CD4-positive, alpha-beta memory T cell (primary cell): ENCODE measurements at regions of chr10 and their contacts with region 1.

Region 1: GRCh38 chr10:43287056-43288007 is 20.5 kb upstream of the RASGEF1A start:
- DNase-seq: peak in 4 of 5 donors; percentile 52 to 84 (median 54)
- H3K4me3 ChIP-seq: peak overlapping the region; percentile 10 to 42
- H3K4me3 Mint-ChIP-seq: peak overlapping the region in 7 of 8 donors; percentile 54 to 86 (median 72)
- H3K27ac ChIP-seq: peak overlapping the region; percentile 32
- H3K27ac Mint-ChIP-seq: peak overlapping the region; percentile 73 to 92 (median 87)
- H3K4me1 ChIP-seq: peaks cover 42% of the 10 kb centered on the region
- H3K4me1 Mint-ChIP-seq: peaks cover 29 to 56% (median 42%) of the 10 kb centered on the region in 4 donors
- H3K27me3 ChIP-seq: no peaks in the 10 kb centered on the region
- H3K27me3 Mint-ChIP-seq: no peaks in the 10 kb centered on the region

Region 2: GRCh38 chr10:43204943-43205671 is 82.2 kb before region 1 on chr10:
- CTCF ChIA-PET with region 1: interaction called, 18 read pairs
- POLR2A ChIA-PET with region 1: interaction called, 3 read pairs
- intact Hi-C with region 1: loop called (anchors 10 kb)
- DNase-seq: peak in 4 of 5 donors; percentile 29 to 52 (median 47)
- H3K4me3 ChIP-seq: no peak overlapping the region
- H3K4me3 Mint-ChIP-seq: no peak overlapping the region
- H3K27ac ChIP-seq: no peak overlapping the region
- H3K27ac Mint-ChIP-seq: peak overlapping the region in 2 of 7 donors; percentile 53 to 66
- H3K4me1 ChIP-seq: peaks cover 8% of the 10 kb centered on the region
- H3K4me1 Mint-ChIP-seq: peaks cover 0 to 10% (median 2%) of the 10 kb centered on the region in 4 donors
- H3K27me3 ChIP-seq: no peaks in the 10 kb centered on the region
- H3K27me3 Mint-ChIP-seq: no peaks in the 10 kb centered on the region

Region 3: DNA sequence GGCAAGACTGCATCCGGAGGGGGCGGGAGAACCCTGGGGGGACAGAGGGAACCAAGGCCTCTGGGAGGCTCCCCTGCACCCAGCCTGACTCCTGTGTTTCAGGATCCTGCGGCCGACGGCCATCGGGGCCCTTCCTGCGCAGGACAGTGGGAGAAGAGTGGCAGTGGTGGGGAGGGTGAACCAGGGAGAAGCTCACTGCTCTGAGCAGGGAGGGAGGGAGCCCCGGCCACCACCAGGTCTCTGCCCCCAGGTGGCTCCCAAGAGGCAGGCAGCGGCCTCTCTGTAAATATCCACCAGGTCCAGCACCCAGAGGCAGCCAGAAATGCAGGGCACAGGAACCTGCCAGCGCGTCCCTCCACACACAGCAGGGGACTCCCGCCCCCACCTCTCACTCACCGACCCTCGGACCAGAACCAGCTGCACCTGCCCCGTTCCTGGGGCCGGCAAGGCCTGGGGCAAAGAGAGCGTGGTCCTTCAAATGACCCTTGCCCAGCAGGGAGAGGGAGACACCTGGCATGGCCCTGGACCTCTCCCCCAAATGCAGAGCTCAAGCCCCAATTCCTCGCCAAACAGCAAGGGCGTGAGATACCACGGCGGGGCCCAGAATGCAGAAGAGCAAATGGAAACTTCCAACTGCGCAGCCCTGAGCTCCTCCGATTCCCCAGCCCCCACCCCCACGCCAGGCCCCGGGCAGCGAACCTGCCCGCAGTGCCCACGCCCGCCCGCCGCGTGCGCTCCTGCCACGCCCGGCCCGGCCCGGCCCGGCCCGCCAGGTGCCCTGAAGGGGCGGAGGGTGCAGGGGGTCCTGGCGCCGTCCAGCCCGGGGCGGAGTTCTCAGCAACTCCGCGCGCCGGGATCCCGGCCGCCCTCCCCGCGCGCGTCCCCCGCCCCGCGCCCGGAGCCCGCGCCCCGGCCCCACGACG is 21.3 kb before region 1 on chr10:
- CTCF ChIA-PET with region 1: interaction called, 38 read pairs
- POLR2A ChIA-PET with region 1: interaction called, 37 read pairs
- intact Hi-C with region 1: no loop called
- DNase-seq: peak; percentile 60 to 62 (median 61)
- H3K4me3 ChIP-seq: peak overlapping the region in 1 of 2 donors; percentile 54
- H3K4me3 Mint-ChIP-seq: peak overlapping the region; percentile 85 to 93 (median 89)
- H3K27ac ChIP-seq: peak overlapping the region; percentile 15
- H3K27ac Mint-ChIP-seq: peak overlapping the region; percentile 53 to 91 (median 72)
- H3K4me1 ChIP-seq: peaks cover 10% of the 10 kb centered on the region
- H3K4me1 Mint-ChIP-seq: peaks cover 6 to 24% (median 15%) of the 10 kb centered on the region in 4 donors
- H3K27me3 ChIP-seq: peaks cover 17% of the 10 kb centered on the region
- H3K27me3 Mint-ChIP-seq: peaks cover 5 to 9% of the 10 kb centered on the region in 2 donors

Region 4: DNA sequence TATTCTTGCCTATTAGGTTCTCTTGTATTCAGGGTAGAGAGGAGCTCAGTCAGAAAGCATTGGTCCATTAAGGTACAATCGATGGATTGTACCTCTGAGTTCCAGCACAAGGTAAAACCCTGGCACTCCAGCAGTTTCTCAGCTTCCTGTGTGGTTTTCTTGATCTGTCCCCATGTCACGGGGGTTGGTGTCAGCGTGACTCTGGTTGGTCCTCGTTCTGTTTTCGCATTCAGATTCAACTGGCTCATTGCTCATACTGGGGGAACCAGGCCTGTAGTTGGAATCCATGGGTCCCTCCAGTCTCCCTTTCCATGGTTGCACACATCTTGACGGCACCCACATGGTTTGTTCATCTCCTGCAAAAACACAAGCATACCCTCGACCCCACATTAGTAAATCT is 12.2 kb after region 1 on chr10:
- CTCF ChIA-PET with region 1: interaction called, 39 read pairs
- POLR2A ChIA-PET with region 1: interaction called, 21 read pairs
- intact Hi-C with region 1: no loop called
- DNase-seq: peak; percentile 59 to 75 (median 64)
- H3K4me3 ChIP-seq: peak overlapping the region in 1 of 2 donors; percentile 9
- H3K4me3 Mint-ChIP-seq: peak overlapping the region in 7 of 8 donors; percentile 4 to 81 (median 68)
- H3K27ac ChIP-seq: peak overlapping the region; percentile 48
- H3K27ac Mint-ChIP-seq: peak overlapping the region; percentile 86 to 96 (median 94)
- H3K4me1 ChIP-seq: peaks cover 66% of the 10 kb centered on the region
- H3K4me1 Mint-ChIP-seq: peaks cover 57 to 98% (median 77%) of the 10 kb centered on the region in 4 donors
- H3K27me3 ChIP-seq: no peaks in the 10 kb centered on the region
- H3K27me3 Mint-ChIP-seq: no peaks in the 10 kb centered on the region

Region 5: DNA sequence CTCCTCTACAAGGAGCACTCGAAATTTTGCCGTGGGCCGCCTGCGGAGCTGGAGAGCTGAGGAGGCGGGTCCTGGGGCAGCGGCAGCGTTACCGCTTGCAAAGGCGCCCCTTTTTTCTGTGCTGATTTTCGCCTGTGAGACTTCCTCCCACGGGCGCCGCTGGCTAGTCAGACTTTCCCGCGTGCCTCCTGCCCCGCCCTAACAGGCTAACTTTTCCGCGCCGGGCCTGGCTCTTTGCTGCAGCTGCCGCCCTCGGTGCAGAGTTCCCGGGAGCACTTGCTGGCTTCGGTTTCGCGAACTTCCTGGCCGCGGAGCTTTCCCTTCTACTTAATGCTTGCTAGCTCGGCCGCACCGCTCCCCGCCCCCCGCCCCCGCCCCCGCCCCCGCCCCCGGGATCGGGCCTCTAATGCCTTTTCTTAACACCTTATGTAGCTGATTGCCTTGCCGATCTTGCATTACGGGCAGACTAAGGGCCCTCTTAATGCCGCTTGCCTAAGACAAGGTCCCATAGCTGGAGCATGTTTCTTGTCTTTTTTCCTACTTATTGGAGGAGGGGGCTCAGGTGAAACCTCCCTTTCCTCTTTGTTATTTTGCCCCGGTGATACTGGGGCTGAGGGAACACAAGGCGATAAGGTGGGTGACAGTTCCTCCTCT is 17.5 kb after region 1 on chr10:
- CTCF ChIA-PET with region 1: interaction called, 39 read pairs
- POLR2A ChIA-PET with region 1: interaction called, 21 read pairs
- intact Hi-C with region 1: no loop called
- DNase-seq: peak in 4 of 5 donors; percentile 41 to 68 (median 44)
- H3K4me3 ChIP-seq: peak overlapping the region in 1 of 2 donors; percentile 44
- H3K4me3 Mint-ChIP-seq: peak overlapping the region; percentile 74 to 87 (median 84)
- H3K27ac ChIP-seq: peak overlapping the region; percentile 8
- H3K27ac Mint-ChIP-seq: peak overlapping the region; percentile 55 to 91 (median 88)
- H3K4me1 ChIP-seq: peaks cover 47% of the 10 kb centered on the region
- H3K4me1 Mint-ChIP-seq: peaks cover 48 to 73% (median 60%) of the 10 kb centered on the region in 4 donors
- H3K27me3 ChIP-seq: no peaks in the 10 kb centered on the region
- H3K27me3 Mint-ChIP-seq: no peaks in the 10 kb centered on the region

Region 6: GRCh38 chr10:43502931-43503330 is 215.6 kb after region 1 on chr10:
- CTCF ChIA-PET with region 1: no interaction called
- POLR2A ChIA-PET with region 1: no interaction called
- intact Hi-C with region 1: no loop called
- DNase-seq: no peak
- H3K4me3 ChIP-seq: no peak overlapping the region
- H3K4me3 Mint-ChIP-seq: no peak overlapping the region
- H3K27ac ChIP-seq: no peak overlapping the region
- H3K27ac Mint-ChIP-seq: no peak overlapping the region
- H3K4me1 ChIP-seq: no peaks in the 10 kb centered on the region
- H3K4me1 Mint-ChIP-seq: no peaks in the 10 kb centered on the region
- H3K27me3 ChIP-seq: no peaks in the 10 kb centered on the region
- H3K27me3 Mint-ChIP-seq: no peaks in the 10 kb centered on the region